Right ventricle myocardium superior (tissue), 1 donor: ENCODE measurements at regions of chr1 and their contacts with region 1.

Region 1: GRCh38 chr1:151156515-151156819 is at the start of gene TNFAIP8L2:
- DNase-seq: peak; percentile 83
- ATAC-seq: peak; percentile 71
- total RNA-seq, gene TNFAIP8L2: 1.5 TPM

Region 2: DNA sequence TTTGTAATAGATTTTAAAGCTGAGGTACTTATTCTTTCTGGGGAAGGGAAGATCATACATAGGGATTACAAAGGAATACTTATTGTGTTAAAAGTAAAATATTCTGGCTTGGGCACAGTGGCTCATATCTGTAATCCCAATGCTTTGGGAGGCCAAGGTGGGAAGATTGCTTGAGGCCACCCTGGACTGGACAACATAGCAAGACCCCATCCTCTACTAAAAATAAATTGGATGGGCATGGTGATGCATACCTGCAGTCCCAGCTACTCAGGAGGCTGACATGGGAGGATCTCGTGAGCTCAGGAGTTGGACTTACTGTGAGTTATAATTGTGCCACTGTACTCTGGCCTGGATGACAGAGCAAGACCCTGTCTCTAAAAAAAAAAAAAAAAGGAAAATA is 58.3 kb before region 1 on chr1:
- intact Hi-C with region 1: loop called (anchors 2 kb)
- DNase-seq: no peak
- ATAC-seq: no peak

Region 3: GRCh38 chr1:151189638-151190445 is 33.4 kb after region 1 on chr1 and contains the start of gene VPS72:
- intact Hi-C with region 1: no loop called
- DNase-seq: peak; percentile 89
- ATAC-seq: peak; percentile 99
- total RNA-seq, gene VPS72: 37.5 TPM